ENCODE measurements at regions of chr7 and their contacts with region 1.

Region 1: GRCh38 chr7:7968543-7969305 is at the start of gene GLCCI1:
- DNase-seq: peak; percentile 97
- H3K4me3 ChIP-seq: peak within 1 kb of the TSS; percentile 61 to 98 (median 69)
- H3K27ac ChIP-seq: peak within 1 kb of the TSS; percentile 58
- H3K4me1 ChIP-seq: peaks cover 2% of the 10 kb centered on the region
- H3K27me3 ChIP-seq: no peaks in the 10 kb centered on the region
- CTCF ChIP-seq: no peak
- total RNA-seq, gene GLCCI1: 7.0 to 14.6 TPM

Region 2: DNA sequence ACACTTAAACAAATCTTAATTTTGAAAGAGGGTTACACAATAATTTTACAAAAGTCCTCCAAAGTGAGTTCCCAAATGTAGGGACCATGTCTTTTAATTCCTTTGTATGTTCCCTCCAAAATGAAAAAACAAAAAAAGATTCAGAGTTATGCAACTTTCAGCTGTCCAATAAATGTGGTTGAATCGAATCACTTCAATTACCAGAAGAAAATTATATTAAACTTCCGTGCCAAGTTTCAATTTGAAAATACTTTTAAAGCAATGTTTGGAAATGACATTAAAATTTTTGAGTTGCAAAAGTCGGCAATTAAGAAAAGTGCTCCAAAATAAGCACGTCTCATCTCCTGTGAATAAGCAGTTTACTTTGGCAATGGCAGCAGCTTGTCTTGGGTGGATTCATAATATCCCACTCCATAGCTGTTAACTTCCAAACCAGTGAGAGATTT is 846.7 kb before region 1 on chr7:
- CTCF ChIA-PET with region 1: no interaction called
- dilution Hi-C with region 1: no loop called
- in situ Hi-C with region 1: no loop called
- intact Hi-C with region 1: no loop called
- DNase-seq: no peak
- H3K4me3 ChIP-seq: no peak overlapping the region
- H3K27ac ChIP-seq: no peak overlapping the region
- H3K4me1 ChIP-seq: no peaks in the 10 kb centered on the region
- H3K27me3 ChIP-seq: no peaks in the 10 kb centered on the region
- CTCF ChIP-seq: no peak

Region 3: DNA sequence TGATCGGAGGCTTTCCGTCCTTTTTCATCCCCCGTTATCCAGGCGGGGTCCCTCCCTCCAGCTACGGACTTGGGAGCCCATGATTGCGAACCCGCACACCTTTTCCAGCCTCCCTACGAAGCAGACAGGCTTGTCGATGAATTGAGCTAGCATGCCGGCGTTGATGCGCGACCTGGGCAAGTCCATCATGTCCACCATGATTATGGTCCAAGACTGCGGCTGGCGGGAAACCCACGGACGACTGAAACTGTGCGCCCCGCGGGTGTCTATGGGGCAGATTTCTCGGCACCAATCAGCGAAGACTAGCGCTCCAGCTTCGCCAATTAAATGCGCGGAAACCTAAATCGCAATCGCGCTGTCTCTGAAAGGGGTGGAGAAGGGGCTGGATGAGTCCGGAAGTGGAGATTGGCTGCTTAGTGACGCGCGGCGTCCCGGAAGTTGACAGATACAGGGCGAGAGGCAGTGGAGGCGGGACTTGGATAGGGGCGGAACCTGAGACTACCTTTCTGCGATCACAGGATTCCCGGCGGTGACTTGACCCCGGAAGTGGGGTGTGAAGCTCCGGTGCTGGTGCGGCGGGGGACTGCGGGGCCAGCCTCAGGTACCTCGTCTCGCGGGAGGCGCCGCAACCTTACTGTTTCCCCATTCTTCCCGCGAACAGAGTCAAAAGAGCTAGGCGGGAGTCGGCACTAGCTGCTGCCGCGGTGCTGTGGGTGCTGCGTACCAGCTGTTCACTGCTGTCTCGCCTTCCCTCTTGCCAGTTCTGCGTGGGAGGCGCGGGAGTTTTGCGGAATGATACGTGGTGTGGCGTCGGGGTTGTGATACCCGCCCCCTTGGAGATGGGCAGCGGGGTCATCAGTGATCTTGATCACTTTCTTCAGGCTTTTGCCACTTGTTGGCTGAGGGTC is 328.2 kb before region 1 on chr7 and contains the start of gene UMAD1:
- CTCF ChIA-PET with region 1: no interaction called
- dilution Hi-C with region 1: no loop called
- in situ Hi-C with region 1: no loop called
- intact Hi-C with region 1: loop called (anchors 5 kb)
- DNase-seq: peak; percentile 100
- H3K4me3 ChIP-seq: peak within 1 kb of the TSS; percentile 83 to 97 (median 96)
- H3K27ac ChIP-seq: peak within 1 kb of the TSS; percentile 94
- H3K4me1 ChIP-seq: peaks cover 7% of the 10 kb centered on the region
- H3K27me3 ChIP-seq: no peaks in the 10 kb centered on the region
- CTCF ChIP-seq: no peak
- total RNA-seq, gene UMAD1: 12.0 to 12.7 TPM

Region 4: DNA sequence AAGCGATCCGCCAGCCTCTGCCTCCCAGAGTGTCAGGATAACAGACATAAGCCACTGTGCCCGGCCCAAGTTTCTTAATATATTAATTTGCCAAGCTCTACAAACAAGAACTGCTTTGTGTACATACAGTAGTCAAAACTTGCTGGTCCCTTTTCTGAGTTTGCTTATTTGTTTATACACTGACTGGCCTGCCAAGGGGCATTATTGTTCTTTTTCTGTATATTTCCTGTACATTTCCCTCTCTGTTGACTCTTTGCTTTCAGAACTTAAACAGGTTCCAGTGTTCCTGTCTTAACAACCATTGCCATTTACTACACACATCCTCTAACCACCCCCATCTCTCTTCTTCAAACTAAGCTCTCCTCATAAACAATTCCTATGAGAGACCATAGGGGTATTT is 188.8 kb before region 1 on chr7:
- CTCF ChIA-PET with region 1: interaction called, 20 read pairs
- dilution Hi-C with region 1: no loop called
- in situ Hi-C with region 1: no loop called
- intact Hi-C with region 1: no loop called
- DNase-seq: no peak
- H3K4me3 ChIP-seq: no peak overlapping the region
- H3K27ac ChIP-seq: no peak overlapping the region
- H3K4me1 ChIP-seq: peaks cover 3% of the 10 kb centered on the region
- H3K27me3 ChIP-seq: no peaks in the 10 kb centered on the region
- CTCF ChIP-seq: no peak

Region 5: GRCh38 chr7:7911371-7912155 is 57.2 kb before region 1 on chr7:
- CTCF ChIA-PET with region 1: no interaction called
- dilution Hi-C with region 1: no loop called
- in situ Hi-C with region 1: no loop called
- intact Hi-C with region 1: loop called (anchors 2 kb)
- DNase-seq: peak; percentile 90
- H3K4me3 ChIP-seq: no peak overlapping the region
- H3K27ac ChIP-seq: peak overlapping the region; percentile 51
- H3K4me1 ChIP-seq: peaks cover 16% of the 10 kb centered on the region
- H3K27me3 ChIP-seq: no peaks in the 10 kb centered on the region
- CTCF ChIP-seq: no peak

Region 6: GRCh38 chr7:8070451-8071180 is 101.9 kb after region 1 on chr7:
- CTCF ChIA-PET with region 1: no interaction called
- dilution Hi-C with region 1: no loop called
- in situ Hi-C with region 1: no loop called
- intact Hi-C with region 1: loop called (anchors 10 kb)
- DNase-seq: no peak
- H3K4me3 ChIP-seq: no peak overlapping the region
- H3K27ac ChIP-seq: no peak overlapping the region
- H3K4me1 ChIP-seq: peaks cover 1% of the 10 kb centered on the region
- H3K27me3 ChIP-seq: no peaks in the 10 kb centered on the region
- CTCF ChIP-seq: no peak

Region 7: DNA sequence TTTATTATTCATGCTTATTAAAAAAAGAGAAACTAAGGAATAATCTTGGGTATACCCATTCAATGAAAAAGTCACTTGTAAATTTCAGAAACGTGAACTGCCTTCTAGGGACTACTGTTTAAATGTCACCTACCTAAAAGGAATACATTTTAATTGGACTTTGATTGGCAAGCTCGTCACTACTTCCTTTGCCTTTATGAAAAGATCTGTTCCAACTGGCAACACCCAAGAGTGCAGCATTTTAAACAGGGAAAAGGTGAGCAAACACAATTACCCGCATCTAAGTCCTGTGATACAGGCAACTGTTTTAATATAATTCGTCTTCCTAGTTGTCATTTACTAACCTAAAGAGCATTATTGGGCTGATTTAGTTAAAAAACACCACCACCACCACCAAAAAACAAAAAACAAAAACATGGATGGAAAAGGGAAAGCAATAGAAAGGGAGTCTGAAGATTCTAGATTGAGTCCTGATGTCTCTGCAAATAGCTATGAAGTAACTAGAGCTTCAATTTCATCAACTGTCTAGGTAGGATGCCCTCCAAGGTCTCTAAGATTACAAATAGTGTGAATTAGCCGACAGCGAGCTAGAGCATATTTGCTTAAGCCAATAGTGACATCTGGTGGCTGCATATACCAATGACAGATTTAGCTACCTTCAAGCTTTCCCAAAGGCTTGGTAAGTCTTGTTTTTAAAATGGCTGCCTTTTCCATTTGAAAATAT is 327.1 kb after region 1 on chr7:
- CTCF ChIA-PET with region 1: no interaction called
- dilution Hi-C with region 1: no loop called
- in situ Hi-C with region 1: no loop called
- intact Hi-C with region 1: loop called (anchors 5 kb)
- DNase-seq: peak; percentile 70
- H3K4me3 ChIP-seq: no peak overlapping the region
- H3K27ac ChIP-seq: no peak overlapping the region
- H3K4me1 ChIP-seq: no peaks in the 10 kb centered on the region
- H3K27me3 ChIP-seq: no peaks in the 10 kb centered on the region
- CTCF ChIP-seq: peak; percentile 79 to 81